ENCODE measurements at regions of chr19 and their contacts with region 1.

Region 1: GRCh38 chr19:45038931-45039893 is at the start of gene CLASRP:
- DNase-seq: peak; percentile 98
- H3K4me3 ChIP-seq: peak within 1 kb of the TSS; percentile 72 to 90
- H3K27ac ChIP-seq: peak within 1 kb of the TSS; percentile 88 to 93
- H3K4me1 ChIP-seq: peaks cover 10 to 11% of the 10 kb centered on the region in 2 experiments; a peak in 3 of 4 replicates
- H3K27me3 ChIP-seq: no peaks in the 10 kb centered on the region
- CTCF ChIP-seq: no peak
- EP300 ChIP-seq: no peak
- RAD21 ChIP-seq: no peak
- polyA plus RNA-seq, gene CLASRP: 53.8 and 54.8 TPM in 2 replicates

Region 2: GRCh38 chr19:45027371-45027770 is 11.8 kb before region 1 on chr19:
- CTCF ChIA-PET with region 1: interaction called, 4 read pairs
- POLR2A ChIA-PET with region 1: interaction called, 11 read pairs
- DNase-seq: no peak
- H3K4me3 ChIP-seq: no peak overlapping the region
- H3K27ac ChIP-seq: no peak overlapping the region
- H3K4me1 ChIP-seq: no peaks in the 10 kb centered on the region
- H3K27me3 ChIP-seq: no peaks in the 10 kb centered on the region
- CTCF ChIP-seq: no peak
- EP300 ChIP-seq: no peak
- RAD21 ChIP-seq: no peak

Region 3: DNA sequence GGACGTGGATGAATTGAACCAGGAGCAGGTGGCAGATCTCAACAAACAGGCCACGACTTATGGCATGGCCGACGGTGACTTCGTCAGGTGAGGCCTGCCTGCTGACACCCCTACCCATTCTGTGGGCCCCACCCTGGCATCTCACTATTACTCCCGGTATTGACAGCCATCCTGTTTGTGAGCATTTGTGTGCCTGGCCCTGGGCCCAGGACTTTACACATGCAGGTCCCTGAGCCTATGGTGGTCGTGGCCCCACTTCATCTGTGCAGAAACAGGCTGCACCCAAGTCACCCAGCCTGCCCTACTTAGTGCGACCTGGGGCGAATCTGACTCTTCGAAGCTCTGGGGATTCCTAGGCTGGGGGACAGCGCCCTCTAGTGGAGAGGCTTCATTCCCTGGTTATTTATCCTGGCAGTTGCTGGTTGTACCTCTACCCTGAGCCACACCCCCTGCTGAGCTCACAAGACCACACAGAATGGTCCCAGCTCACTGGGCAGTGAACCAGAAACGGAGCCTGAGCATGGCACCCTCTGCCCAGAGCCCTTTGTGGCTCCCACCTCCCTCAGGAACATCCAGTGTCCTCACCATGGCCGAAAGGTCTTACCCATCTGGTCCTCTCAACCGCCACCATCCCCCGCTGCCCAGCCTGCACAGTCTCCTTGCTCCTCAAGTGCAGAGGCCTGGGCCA is 20.2 kb after region 1 on chr19:
- CTCF ChIA-PET with region 1: interaction called, 19 read pairs
- POLR2A ChIA-PET with region 1: interaction called, 3 read pairs
- DNase-seq: peak; percentile 87
- H3K4me3 ChIP-seq: no peak overlapping the region; a peak in 1 of 4 replicates
- H3K27ac ChIP-seq: no peak overlapping the region
- H3K4me1 ChIP-seq: no peaks in the 10 kb centered on the region
- H3K27me3 ChIP-seq: no peaks in the 10 kb centered on the region
- CTCF ChIP-seq: peak; percentile 93
- EP300 ChIP-seq: no peak
- RAD21 ChIP-seq: peak; percentile 67

Region 4: DNA sequence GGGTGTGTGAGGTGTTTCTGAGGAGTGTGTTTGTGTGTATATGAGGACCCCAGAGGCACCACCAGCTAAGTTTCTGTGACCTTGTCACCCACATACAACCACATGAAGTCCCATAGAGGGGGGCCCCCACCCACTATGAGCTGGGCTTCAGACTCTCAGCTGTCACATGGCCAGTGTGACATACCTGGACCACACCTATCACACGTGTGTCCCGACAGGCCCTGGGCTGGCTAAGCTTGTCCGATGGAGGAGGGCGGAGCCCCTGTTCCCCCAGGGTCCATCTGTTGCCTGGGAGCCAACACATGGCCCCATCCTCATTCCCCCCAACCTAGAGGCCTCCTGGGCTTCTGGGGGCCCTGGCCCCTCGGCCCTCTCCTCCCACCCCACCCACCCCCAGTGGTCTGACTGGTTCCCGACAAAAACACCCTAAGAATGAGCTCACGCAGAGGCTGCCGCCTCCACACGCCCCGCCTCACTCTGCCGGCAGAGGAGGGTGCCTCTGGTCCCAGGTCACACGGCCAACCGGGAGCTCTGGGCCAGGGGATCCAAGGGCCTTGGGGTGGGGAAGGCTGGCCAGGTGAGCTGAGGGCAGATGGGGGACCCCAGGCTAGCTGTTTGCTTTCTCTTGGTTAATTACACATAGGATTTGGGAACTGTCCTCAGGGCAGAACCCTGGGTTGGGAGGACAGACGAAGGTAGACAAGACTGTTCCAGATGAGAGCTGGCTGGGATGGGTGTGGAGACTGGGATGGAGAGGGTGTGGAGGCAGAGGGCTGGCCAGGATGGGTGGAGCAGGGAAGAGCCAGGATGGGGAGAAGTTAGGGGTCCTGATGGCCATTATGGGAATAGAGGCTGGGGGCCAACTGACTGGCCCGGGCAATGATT is 305.7 kb after region 1 on chr19:
- CTCF ChIA-PET with region 1: no interaction called
- POLR2A ChIA-PET with region 1: no interaction called
- DNase-seq: no peak
- H3K4me3 ChIP-seq: no peak overlapping the region
- H3K27ac ChIP-seq: no peak overlapping the region
- H3K4me1 ChIP-seq: peaks cover 0 to 2% of the 10 kb centered on the region in 2 experiments; a peak in 1 of 4 replicates
- H3K27me3 ChIP-seq: no peaks in the 10 kb centered on the region; the same call in 1 of the 2 replicates
- CTCF ChIP-seq: no peak
- EP300 ChIP-seq: no peak
- RAD21 ChIP-seq: no peak